ENCODE measurements at regions of chr1 and their contacts with region 1.

Region 1: GRCh38 chr1:54199765-54200518 is at the starts of genes CYB5RL and MRPL37:
- DNase-seq: peak; percentile 91
- H3K4me3 Mint-ChIP-seq: peak within 1 kb of the TSS; percentile 85
- H3K27ac Mint-ChIP-seq: peak within 1 kb of the TSS; percentile 71
- H3K4me1 Mint-ChIP-seq: peaks cover 37% of the 10 kb centered on the region
- H3K27me3 Mint-ChIP-seq: no peaks in the 10 kb centered on the region
- total RNA-seq, gene CYB5RL: 8.9 to 10.0 TPM
- total RNA-seq, gene MRPL37: 88.0 to 91.9 TPM

Region 2: GRCh38 chr1:53942127-53942946 is 257.6 kb before region 1 on chr1:
- CTCF ChIA-PET with region 1: no interaction called
- POLR2A ChIA-PET with region 1: no interaction called
- DNase-seq: no peak
- H3K4me3 Mint-ChIP-seq: no peak overlapping the region
- H3K27ac Mint-ChIP-seq: no peak overlapping the region
- H3K4me1 Mint-ChIP-seq: peaks cover 47% of the 10 kb centered on the region
- H3K27me3 Mint-ChIP-seq: no peaks in the 10 kb centered on the region

Region 3: DNA sequence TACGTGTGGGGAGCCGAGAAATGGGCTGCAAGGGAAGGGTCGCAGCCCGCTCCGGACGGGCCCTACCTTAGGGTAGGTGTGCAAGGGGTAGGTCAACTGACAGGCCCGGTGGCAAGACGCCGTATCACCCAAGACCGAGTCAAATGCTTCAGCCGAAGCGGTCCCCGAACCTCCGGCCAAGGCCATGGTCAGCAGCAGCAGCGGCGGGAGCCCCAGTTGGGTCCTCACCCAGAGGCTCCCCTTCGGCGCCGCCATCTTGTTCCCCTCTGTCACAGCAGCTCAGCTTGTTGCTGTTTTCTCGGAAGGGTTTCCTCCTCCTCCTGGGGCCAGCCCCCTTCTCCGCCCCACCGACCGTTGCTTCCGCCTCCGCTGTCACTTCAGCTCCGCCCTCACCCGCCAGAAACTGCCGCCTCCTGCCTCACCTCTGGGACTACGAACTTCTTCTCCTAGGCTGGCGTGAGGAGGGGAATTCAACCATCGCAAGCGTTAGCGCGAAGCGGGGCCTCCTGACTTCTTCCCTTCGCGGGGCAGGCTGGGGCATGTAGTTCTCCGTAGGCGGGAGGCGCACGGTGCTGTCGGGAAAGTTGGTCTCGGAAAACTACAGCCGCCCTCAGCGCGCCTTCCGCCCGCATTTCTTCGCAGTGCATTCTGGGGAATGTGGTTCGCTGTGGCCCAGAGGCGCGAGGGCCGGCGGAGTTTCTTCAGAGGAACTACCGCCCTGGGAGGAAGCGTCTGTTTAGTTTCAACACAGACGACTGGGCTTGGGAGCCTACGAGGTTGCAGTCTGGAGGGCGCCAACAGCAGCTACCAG is 146.8 kb before region 1 on chr1 and contains the starts of genes TCEANC2 and TMEM59:
- CTCF ChIA-PET with region 1: interaction called, 4 read pairs
- POLR2A ChIA-PET with region 1: interaction called, 12 read pairs
- DNase-seq: peak; percentile 99
- H3K4me3 Mint-ChIP-seq: no peak within 1 kb of the TSS
- H3K27ac Mint-ChIP-seq: no peak within 1 kb of the TSS
- H3K4me1 Mint-ChIP-seq: peaks cover 37% of the 10 kb centered on the region
- H3K27me3 Mint-ChIP-seq: no peaks in the 10 kb centered on the region
- total RNA-seq, gene TCEANC2: 11.5 to 13.5 TPM
- total RNA-seq, gene TMEM59: 278 to 280 TPM

Region 4: GRCh38 chr1:54220004-54220811 is 20.3 kb after region 1 on chr1:
- CTCF ChIA-PET with region 1: no interaction called
- POLR2A ChIA-PET with region 1: interaction called, 15 read pairs
- DNase-seq: no peak
- H3K4me3 Mint-ChIP-seq: no peak overlapping the region
- H3K27ac Mint-ChIP-seq: no peak overlapping the region
- H3K4me1 Mint-ChIP-seq: peaks cover 3% of the 10 kb centered on the region
- H3K27me3 Mint-ChIP-seq: no peaks in the 10 kb centered on the region

Region 5: GRCh38 chr1:54287176-54287650 is 87.3 kb after region 1 on chr1:
- CTCF ChIA-PET with region 1: interaction called, 7 read pairs
- POLR2A ChIA-PET with region 1: interaction called, 20 read pairs
- DNase-seq: peak; percentile 83
- H3K4me3 Mint-ChIP-seq: peak overlapping the region; percentile 44
- H3K27ac Mint-ChIP-seq: peak overlapping the region; percentile 82
- H3K4me1 Mint-ChIP-seq: peaks cover 84% of the 10 kb centered on the region
- H3K27me3 Mint-ChIP-seq: no peaks in the 10 kb centered on the region

Region 6: DNA sequence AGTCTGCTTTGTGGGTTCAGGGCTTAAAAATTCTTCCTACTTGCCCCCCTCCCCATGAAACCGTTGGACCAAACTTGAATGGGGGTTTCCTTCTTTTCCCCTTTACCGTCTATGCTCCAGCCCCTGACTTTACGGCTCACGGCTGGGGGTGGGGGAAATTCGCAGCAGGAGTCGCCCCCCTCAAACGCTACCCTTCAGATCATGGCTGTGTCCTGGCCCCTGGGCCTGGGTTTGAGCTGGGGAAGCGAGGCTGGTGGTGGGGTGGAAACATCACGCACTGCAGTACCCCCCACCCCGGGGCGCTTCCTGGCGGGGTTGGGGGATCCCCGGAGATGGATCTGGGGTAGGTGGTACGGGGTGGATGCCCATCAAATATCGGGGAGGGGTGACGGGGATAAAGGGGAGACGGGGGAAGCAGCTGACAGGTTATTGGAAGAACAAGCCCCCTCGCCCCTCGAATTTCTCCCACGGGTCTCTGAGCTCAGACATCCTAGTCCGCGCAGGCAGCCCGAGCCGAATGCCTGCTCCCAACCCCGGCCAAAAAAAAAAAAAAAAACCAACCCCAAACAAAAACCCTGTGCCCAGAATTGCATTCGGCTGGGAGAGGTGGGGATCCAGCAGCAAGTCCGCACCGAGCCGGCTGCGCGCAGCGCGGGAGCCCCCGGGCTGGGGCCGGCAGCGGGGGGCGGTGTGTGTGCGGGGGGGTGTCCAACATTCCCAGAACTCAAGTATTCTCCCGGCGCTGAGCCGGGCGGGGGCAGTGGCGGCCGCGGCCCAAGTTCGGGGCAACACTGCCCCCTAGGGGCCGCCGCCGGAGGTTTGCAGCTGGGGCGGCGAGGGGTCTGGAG is 289.1 kb after region 1 on chr1:
- CTCF ChIA-PET with region 1: interaction called, 17 read pairs
- POLR2A ChIA-PET with region 1: interaction called, 6 read pairs
- DNase-seq: peak; percentile 70
- H3K4me3 Mint-ChIP-seq: peak overlapping the region; percentile 81
- H3K27ac Mint-ChIP-seq: peak overlapping the region; percentile 61
- H3K4me1 Mint-ChIP-seq: peaks cover 47% of the 10 kb centered on the region
- H3K27me3 Mint-ChIP-seq: peaks cover 41% of the 10 kb centered on the region